MCF 10A (cell line): ENCODE measurements at regions of chr9 and their contacts with region 1.

Region 1: DNA sequence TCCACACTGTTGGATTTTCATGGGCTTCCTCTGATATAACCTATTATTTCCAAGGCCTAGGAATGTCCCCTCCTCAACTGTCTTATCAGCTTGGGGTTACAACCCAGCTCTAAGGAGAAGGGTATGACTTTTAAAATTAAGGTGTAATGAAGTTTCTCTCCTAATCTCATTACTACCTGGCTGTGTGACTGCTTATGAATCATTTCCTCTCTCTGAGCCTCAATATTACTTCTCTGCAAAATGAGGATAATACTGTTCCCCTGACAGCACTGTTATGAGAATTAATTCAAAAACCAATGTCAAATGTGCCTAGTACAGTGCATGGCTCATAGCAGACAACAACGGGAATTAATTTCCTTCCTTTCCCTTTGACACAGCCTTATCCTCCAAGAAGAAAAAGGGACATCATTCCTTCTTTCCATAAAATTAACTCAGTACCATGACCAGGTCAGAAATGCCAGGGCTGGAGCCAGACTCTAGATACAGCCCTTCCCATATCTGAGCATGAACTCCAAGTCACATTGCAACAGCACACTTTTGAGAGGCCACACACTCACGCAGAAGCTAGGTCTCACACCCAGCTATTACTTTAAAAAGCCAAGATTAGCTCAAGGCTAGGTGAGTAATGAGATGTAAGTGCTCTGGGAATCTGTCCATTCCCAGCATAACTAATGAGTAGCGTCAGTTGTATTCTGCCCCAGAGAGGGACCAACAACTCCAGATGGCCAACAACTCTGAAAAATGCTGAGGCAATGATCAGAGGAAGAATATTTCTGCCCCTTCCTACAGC is 118.7 kb downstream of the NR6A1 start:
- DNase-seq: peak; percentile 96
- H3K4me3 Mint-ChIP-seq: peak overlapping the region; percentile 33
- H3K27ac Mint-ChIP-seq: peak overlapping the region; percentile 68
- H3K4me1 Mint-ChIP-seq: peaks cover 39% of the 10 kb centered on the region
- H3K27me3 Mint-ChIP-seq: no peaks in the 10 kb centered on the region
- CTCF ChIP-seq: no peak

Region 2: GRCh38 chr9:124482431-124483031 is 169.9 kb before region 1 on chr9:
- CTCF ChIA-PET with region 1: no interaction called
- POLR2A ChIA-PET with region 1: no interaction called
- intact Hi-C with region 1: no loop called
- DNase-seq: no peak
- H3K4me3 Mint-ChIP-seq: no peak overlapping the region
- H3K27ac Mint-ChIP-seq: no peak overlapping the region
- H3K4me1 Mint-ChIP-seq: peaks cover 4% of the 10 kb centered on the region
- H3K27me3 Mint-ChIP-seq: peaks cover 35% of the 10 kb centered on the region
- CTCF ChIP-seq: no peak

Region 3: GRCh38 chr9:124629600-124629999 is 22.8 kb before region 1 on chr9:
- CTCF ChIA-PET with region 1: interaction called, 4 read pairs
- POLR2A ChIA-PET with region 1: interaction called, 41 read pairs
- intact Hi-C with region 1: no loop called
- DNase-seq: peak; percentile 35
- H3K4me3 Mint-ChIP-seq: no peak overlapping the region
- H3K27ac Mint-ChIP-seq: no peak overlapping the region
- H3K4me1 Mint-ChIP-seq: peaks cover 10% of the 10 kb centered on the region
- H3K27me3 Mint-ChIP-seq: no peaks in the 10 kb centered on the region
- CTCF ChIP-seq: no peak

Region 4: GRCh38 chr9:124639637-124640036 is 12.8 kb before region 1 on chr9:
- CTCF ChIA-PET with region 1: interaction called, 7 read pairs
- POLR2A ChIA-PET with region 1: interaction called, 14 read pairs
- intact Hi-C with region 1: no loop called
- DNase-seq: no peak
- H3K4me3 Mint-ChIP-seq: no peak overlapping the region
- H3K27ac Mint-ChIP-seq: no peak overlapping the region
- H3K4me1 Mint-ChIP-seq: no peaks in the 10 kb centered on the region
- H3K27me3 Mint-ChIP-seq: no peaks in the 10 kb centered on the region
- CTCF ChIP-seq: no peak

Region 5: GRCh38 chr9:124725068-124725452 is 72.7 kb after region 1 on chr9:
- CTCF ChIA-PET with region 1: no interaction called
- POLR2A ChIA-PET with region 1: no interaction called
- intact Hi-C with region 1: no loop called
- DNase-seq: no peak
- H3K4me3 Mint-ChIP-seq: no peak overlapping the region
- H3K27ac Mint-ChIP-seq: no peak overlapping the region
- H3K4me1 Mint-ChIP-seq: no peaks in the 10 kb centered on the region
- H3K27me3 Mint-ChIP-seq: no peaks in the 10 kb centered on the region
- CTCF ChIP-seq: no peak

Region 6: GRCh38 chr9:124849801-124850200 is 197.4 kb after region 1 on chr9:
- CTCF ChIA-PET with region 1: no interaction called
- POLR2A ChIA-PET with region 1: no interaction called
- intact Hi-C with region 1: no loop called
- DNase-seq: no peak
- H3K4me3 Mint-ChIP-seq: no peak overlapping the region
- H3K27ac Mint-ChIP-seq: no peak overlapping the region
- H3K4me1 Mint-ChIP-seq: peaks cover 6% of the 10 kb centered on the region
- H3K27me3 Mint-ChIP-seq: no peaks in the 10 kb centered on the region
- CTCF ChIP-seq: no peak